A549 (cell line): ENCODE measurements at regions of chr12 and their contacts with region 1.

Region 1: GRCh38 chr12:98998697-98999299 is 353.7 kb downstream of the APAF1 start:
- DNase-seq: peak; percentile 47 to 73
- ATAC-seq: peak; percentile 81 to 94
- H3K4me3 ChIP-seq: no peak overlapping the region
- H3K27ac ChIP-seq: no peak overlapping the region
- H3K4me1 ChIP-seq: no peaks in the 10 kb centered on the region
- CTCF ChIP-seq: peak; percentile 88
- EP300 ChIP-seq: no peak
- POLR2A ChIP-seq: no peak
- RAD21 ChIP-seq: peak; percentile 91

Region 2: GRCh38 chr12:98955277-98955676 is 43.5 kb before region 1 on chr12:
- CTCF ChIA-PET with region 1: interaction called, 39 read pairs
- POLR2A ChIA-PET with region 1: no interaction called
- DNase-seq: peak; percentile 28 to 52
- ATAC-seq: peak; percentile 88 to 95
- H3K4me3 ChIP-seq: no peak overlapping the region
- H3K27ac ChIP-seq: no peak overlapping the region
- H3K4me1 ChIP-seq: no peaks in the 10 kb centered on the region
- CTCF ChIP-seq: peak; percentile 30; the same call in 2 of the 3 replicates
- EP300 ChIP-seq: no peak
- POLR2A ChIP-seq: no peak
- RAD21 ChIP-seq: peak in 1 of 2 experiments; percentile 34; a peak in 2 of 5 replicates

Region 3: GRCh38 chr12:98983647-98984046 is 15.2 kb before region 1 on chr12:
- CTCF ChIA-PET with region 1: interaction called, 15 read pairs
- POLR2A ChIA-PET with region 1: no interaction called
- DNase-seq: no peak
- ATAC-seq: no peak
- H3K4me3 ChIP-seq: no peak overlapping the region
- H3K27ac ChIP-seq: no peak overlapping the region
- H3K4me1 ChIP-seq: no peaks in the 10 kb centered on the region
- CTCF ChIP-seq: no peak
- EP300 ChIP-seq: no peak
- POLR2A ChIP-seq: no peak
- RAD21 ChIP-seq: no peak

Region 4: DNA sequence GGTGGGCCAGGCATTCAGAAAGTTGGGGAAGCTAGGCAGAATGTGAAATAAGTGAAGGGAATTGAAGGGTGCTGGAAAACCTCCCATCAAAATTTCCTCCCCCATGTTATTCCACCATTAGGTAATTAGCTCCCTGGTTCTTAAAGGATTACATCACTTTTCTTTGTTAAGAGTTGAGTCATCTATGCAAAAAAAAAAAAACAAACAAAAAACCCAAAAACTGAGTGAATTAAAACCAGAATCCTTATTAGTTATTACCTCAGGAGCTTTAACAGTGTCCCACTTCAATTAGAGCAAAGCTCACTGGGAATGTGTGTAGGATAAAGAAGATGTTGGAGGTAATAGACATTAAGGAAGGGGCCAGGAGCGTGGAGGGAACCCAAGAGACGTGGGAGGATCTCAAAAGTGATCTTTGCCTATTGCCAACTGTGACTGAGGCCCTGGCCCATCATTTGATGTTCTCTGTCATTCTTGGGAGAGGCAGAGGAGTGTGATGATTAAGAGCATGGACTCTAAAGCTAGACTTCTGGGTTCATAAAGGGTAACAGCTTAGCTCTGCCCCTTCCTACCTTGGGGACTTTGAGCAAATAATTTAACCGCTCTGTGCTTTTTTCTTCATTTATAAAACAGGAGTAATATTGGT is 11.0 kb after region 1 on chr12:
- CTCF ChIA-PET with region 1: interaction called, 29 read pairs
- POLR2A ChIA-PET with region 1: no interaction called
- DNase-seq: no peak
- ATAC-seq: no peak
- H3K4me3 ChIP-seq: no peak overlapping the region
- H3K27ac ChIP-seq: no peak overlapping the region
- H3K4me1 ChIP-seq: no peaks in the 10 kb centered on the region
- CTCF ChIP-seq: no peak
- EP300 ChIP-seq: no peak
- POLR2A ChIP-seq: no peak
- RAD21 ChIP-seq: no peak

Region 5: GRCh38 chr12:99026332-99027054 is 27.7 kb after region 1 on chr12:
- CTCF ChIA-PET with region 1: no interaction called
- POLR2A ChIA-PET with region 1: no interaction called
- DNase-seq: no peak
- ATAC-seq: no peak
- H3K4me3 ChIP-seq: no peak overlapping the region
- H3K27ac ChIP-seq: no peak overlapping the region
- H3K4me1 ChIP-seq: no peaks in the 10 kb centered on the region
- CTCF ChIP-seq: no peak
- EP300 ChIP-seq: no peak
- POLR2A ChIP-seq: no peak
- RAD21 ChIP-seq: no peak